Caco-2 (cell line): ENCODE measurements at regions of chr1 and their contacts with region 1.

Region 1: DNA sequence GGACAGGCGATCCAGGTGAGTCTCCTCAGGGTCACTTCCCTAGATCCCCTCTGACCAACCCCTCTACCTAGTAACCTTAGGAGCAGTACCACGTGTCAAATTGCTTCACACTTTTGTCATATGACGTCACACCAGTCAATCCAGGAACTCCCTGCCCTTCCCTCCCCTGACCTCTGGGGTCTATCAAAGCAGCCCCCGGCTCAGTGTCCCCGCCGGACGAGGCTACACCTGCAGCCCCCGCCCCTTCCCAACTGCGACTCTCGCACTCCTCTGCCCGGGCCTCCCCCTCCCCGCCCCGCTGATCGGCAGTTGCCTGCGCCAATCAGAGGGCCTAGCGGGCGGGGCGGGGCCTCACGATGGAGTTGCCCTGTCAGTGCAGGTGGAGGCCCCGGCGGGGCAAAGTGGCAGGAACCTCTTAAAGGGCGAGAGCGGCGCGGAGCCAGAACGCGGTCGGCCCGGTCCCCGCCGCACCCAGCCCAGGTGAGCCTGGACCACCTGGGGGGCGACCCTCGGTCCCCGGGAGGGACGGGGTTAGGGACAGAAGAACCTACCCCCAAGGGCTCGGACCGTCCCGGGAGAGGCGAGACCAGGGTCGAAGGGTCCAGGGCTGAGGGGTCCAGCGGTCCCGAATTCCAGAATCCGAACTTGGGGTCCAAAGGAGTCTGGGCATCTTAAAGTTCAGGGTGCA is 27.5 kb upstream of the EPB41 start:
- DNase-seq: peak; percentile 86 to 91
- H3K4me3 ChIP-seq: peak overlapping the region; percentile 45
- H3K4me3 Mint-ChIP-seq: peak overlapping the region; percentile 80
- H3K27ac Mint-ChIP-seq: peak overlapping the region; percentile 83
- H3K4me1 ChIP-seq: peaks cover 17% of the 10 kb centered on the region
- H3K4me1 Mint-ChIP-seq: peaks cover 24% of the 10 kb centered on the region
- H3K27me3 ChIP-seq: no peaks in the 10 kb centered on the region
- H3K27me3 Mint-ChIP-seq: no peaks in the 10 kb centered on the region
- CTCF ChIP-seq: no peak

Region 2: GRCh38 chr1:28756846-28757245 is 130.0 kb before region 1 on chr1:
- CTCF ChIA-PET with region 1: no interaction called
- POLR2A ChIA-PET with region 1: interaction called, 12 read pairs
- intact Hi-C with region 1: no loop called
- DNase-seq: peak in 1 of 2 experiments; percentile 10
- H3K4me3 ChIP-seq: no peak overlapping the region
- H3K4me3 Mint-ChIP-seq: no peak overlapping the region
- H3K27ac Mint-ChIP-seq: no peak overlapping the region
- H3K4me1 ChIP-seq: peaks cover 13% of the 10 kb centered on the region
- H3K4me1 Mint-ChIP-seq: peaks cover 7% of the 10 kb centered on the region
- H3K27me3 ChIP-seq: no peaks in the 10 kb centered on the region
- H3K27me3 Mint-ChIP-seq: no peaks in the 10 kb centered on the region
- CTCF ChIP-seq: no peak

Region 3: GRCh38 chr1:28860332-28861073 is 26.4 kb before region 1 on chr1:
- CTCF ChIA-PET with region 1: no interaction called
- POLR2A ChIA-PET with region 1: no interaction called
- intact Hi-C with region 1: no loop called
- DNase-seq: no peak
- H3K4me3 ChIP-seq: no peak overlapping the region
- H3K4me3 Mint-ChIP-seq: no peak overlapping the region
- H3K27ac Mint-ChIP-seq: no peak overlapping the region
- H3K4me1 ChIP-seq: 0 out of 2 replicates have a peak, but pooled peaks cover 3% of the 10 kb centered on the region
- H3K4me1 Mint-ChIP-seq: no peaks in the 10 kb centered on the region
- H3K27me3 ChIP-seq: no peaks in the 10 kb centered on the region
- H3K27me3 Mint-ChIP-seq: no peaks in the 10 kb centered on the region
- CTCF ChIP-seq: no peak

Region 4: GRCh38 chr1:28914228-28915030 is 27.6 kb after region 1 on chr1 and contains the start of gene EPB41:
- CTCF ChIA-PET with region 1: interaction called, 11 read pairs
- POLR2A ChIA-PET with region 1: interaction called, 9 read pairs
- intact Hi-C with region 1: loop called (anchors 1 kb)
- DNase-seq: peak; percentile 93 to 94
- H3K4me3 ChIP-seq: peak within 1 kb of the TSS; percentile 73
- H3K4me3 Mint-ChIP-seq: peak within 1 kb of the TSS; percentile 81
- H3K27ac Mint-ChIP-seq: peak within 1 kb of the TSS; percentile 81
- H3K4me1 ChIP-seq: peaks cover 6% of the 10 kb centered on the region; the same call in 1 of the 2 replicates
- H3K4me1 Mint-ChIP-seq: no peaks in the 10 kb centered on the region
- H3K27me3 ChIP-seq: no peaks in the 10 kb centered on the region
- H3K27me3 Mint-ChIP-seq: no peaks in the 10 kb centered on the region
- CTCF ChIP-seq: no peak
- total RNA-seq, gene EPB41: 29.5 and 29.8 TPM in 2 replicates

Region 5: DNA sequence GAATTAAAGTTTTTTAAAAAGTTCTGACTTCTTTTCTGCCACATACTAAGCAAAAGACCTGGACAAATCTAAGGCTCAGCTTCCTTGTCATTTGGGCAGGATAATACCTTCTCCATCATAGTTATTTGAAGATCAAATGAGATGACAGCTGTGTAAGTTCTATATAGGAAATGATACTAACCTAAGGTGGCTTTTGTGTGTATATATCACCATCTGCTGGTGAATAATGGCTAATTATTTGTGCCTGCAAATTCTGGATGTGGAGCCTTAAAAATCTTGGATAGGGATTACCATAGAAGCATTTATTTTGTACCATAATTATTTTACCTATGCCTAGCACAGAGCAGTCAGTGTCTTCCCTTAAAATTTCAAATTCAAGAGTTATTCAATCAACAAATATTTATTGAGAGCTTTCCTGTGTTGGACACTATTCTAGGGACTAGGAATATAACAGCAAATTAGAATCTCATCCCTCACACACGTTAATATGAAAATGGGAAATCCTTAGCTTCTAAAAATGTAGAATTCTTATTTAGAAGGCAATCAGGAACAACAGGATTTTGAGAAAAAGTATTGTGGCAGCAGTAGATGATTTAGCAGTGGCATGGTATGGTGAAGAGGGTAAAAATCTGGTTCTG is 147.1 kb after region 1 on chr1:
- CTCF ChIA-PET with region 1: interaction called, 44 read pairs
- POLR2A ChIA-PET with region 1: interaction called, 3 read pairs
- intact Hi-C with region 1: loop called (anchors 1 kb)
- DNase-seq: peak in 1 of 2 experiments; percentile 12
- H3K4me3 ChIP-seq: no peak overlapping the region
- H3K4me3 Mint-ChIP-seq: no peak overlapping the region
- H3K27ac Mint-ChIP-seq: no peak overlapping the region
- H3K4me1 ChIP-seq: no peaks in the 10 kb centered on the region
- H3K4me1 Mint-ChIP-seq: no peaks in the 10 kb centered on the region
- H3K27me3 ChIP-seq: no peaks in the 10 kb centered on the region
- H3K27me3 Mint-ChIP-seq: no peaks in the 10 kb centered on the region
- CTCF ChIP-seq: peak; percentile 26 to 58

Region 6: GRCh38 chr1:29117381-29117780 is 230.5 kb after region 1 on chr1:
- CTCF ChIA-PET with region 1: interaction called, 4 read pairs
- POLR2A ChIA-PET with region 1: no interaction called
- intact Hi-C with region 1: loop called (anchors 2 kb)
- DNase-seq: no peak
- H3K4me3 ChIP-seq: no peak overlapping the region
- H3K4me3 Mint-ChIP-seq: no peak overlapping the region
- H3K27ac Mint-ChIP-seq: no peak overlapping the region
- H3K4me1 ChIP-seq: no peaks in the 10 kb centered on the region
- H3K4me1 Mint-ChIP-seq: no peaks in the 10 kb centered on the region
- H3K27me3 ChIP-seq: no peaks in the 10 kb centered on the region
- H3K27me3 Mint-ChIP-seq: no peaks in the 10 kb centered on the region
- CTCF ChIP-seq: peak in 1 of 2 experiments; percentile 14

Region 7: GRCh38 chr1:29156543-29157268 is 269.8 kb after region 1 on chr1:
- CTCF ChIA-PET with region 1: no interaction called
- POLR2A ChIA-PET with region 1: no interaction called
- intact Hi-C with region 1: no loop called
- DNase-seq: peak; percentile 71 to 76
- H3K4me3 ChIP-seq: no peak overlapping the region
- H3K4me3 Mint-ChIP-seq: peak overlapping the region; percentile 52
- H3K27ac Mint-ChIP-seq: peak overlapping the region; percentile 82
- H3K4me1 ChIP-seq: peaks cover 16% of the 10 kb centered on the region
- H3K4me1 Mint-ChIP-seq: no peaks in the 10 kb centered on the region
- H3K27me3 ChIP-seq: no peaks in the 10 kb centered on the region
- H3K27me3 Mint-ChIP-seq: no peaks in the 10 kb centered on the region
- CTCF ChIP-seq: no peak

Region 8: GRCh38 chr1:29197585-29197924 is 310.7 kb after region 1 on chr1:
- CTCF ChIA-PET with region 1: interaction called, 21 read pairs
- POLR2A ChIA-PET with region 1: no interaction called
- intact Hi-C with region 1: loop called (anchors 1 kb)
- DNase-seq: peak; percentile 53 to 55
- H3K4me3 ChIP-seq: no peak overlapping the region
- H3K4me3 Mint-ChIP-seq: no peak overlapping the region
- H3K27ac Mint-ChIP-seq: no peak overlapping the region
- H3K4me1 ChIP-seq: peaks cover 12% of the 10 kb centered on the region
- H3K4me1 Mint-ChIP-seq: no peaks in the 10 kb centered on the region
- H3K27me3 ChIP-seq: no peaks in the 10 kb centered on the region
- H3K27me3 Mint-ChIP-seq: no peaks in the 10 kb centered on the region
- CTCF ChIP-seq: peak; percentile 29 to 46

Region 9: DNA sequence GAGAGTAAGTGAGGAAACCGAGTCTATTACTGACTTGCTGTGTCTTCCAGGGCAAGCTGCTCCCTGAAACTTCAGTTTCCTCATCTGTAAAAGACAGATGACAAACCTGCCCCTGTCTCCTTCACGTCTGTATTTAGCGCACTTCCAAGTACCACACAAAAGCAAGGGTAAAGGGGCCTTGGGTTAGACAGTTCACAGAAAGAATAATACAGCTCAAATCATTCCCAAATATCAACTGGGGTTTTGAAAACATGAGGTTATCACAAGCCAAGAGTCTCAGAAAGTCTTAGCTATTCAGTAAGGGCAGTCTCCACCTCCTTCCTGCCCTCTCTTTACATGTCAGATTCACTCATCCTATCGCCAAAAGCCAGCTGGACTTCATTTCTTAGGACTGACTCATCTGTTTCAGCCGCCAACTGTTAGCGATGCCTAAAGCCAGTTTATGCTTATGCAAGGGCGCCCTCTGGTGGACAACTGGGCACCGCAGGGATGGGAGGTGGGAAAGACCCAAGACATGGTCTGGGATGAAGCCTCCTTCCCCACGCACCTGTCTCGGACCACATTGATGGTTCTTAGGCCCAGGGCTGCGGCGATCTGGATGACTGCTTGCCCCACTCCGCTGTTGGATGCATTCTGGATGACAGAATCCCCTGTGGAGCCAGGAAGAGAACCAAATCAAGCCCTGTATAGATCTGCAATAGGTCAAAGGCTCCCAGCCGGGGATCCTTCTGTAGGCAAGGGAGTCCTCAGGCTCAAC is 315.9 kb after region 1 on chr1:
- CTCF ChIA-PET with region 1: interaction called, 21 read pairs
- POLR2A ChIA-PET with region 1: no interaction called
- intact Hi-C with region 1: loop called (anchors 1 kb)
- DNase-seq: peak; percentile 89 to 92
- H3K4me3 ChIP-seq: no peak overlapping the region
- H3K4me3 Mint-ChIP-seq: no peak overlapping the region
- H3K27ac Mint-ChIP-seq: peak overlapping the region; percentile 3
- H3K4me1 ChIP-seq: peaks cover 13% of the 10 kb centered on the region
- H3K4me1 Mint-ChIP-seq: no peaks in the 10 kb centered on the region
- H3K27me3 ChIP-seq: no peaks in the 10 kb centered on the region
- H3K27me3 Mint-ChIP-seq: no peaks in the 10 kb centered on the region
- CTCF ChIP-seq: peak; percentile 71 to 77